PC-9 (cell line): ENCODE measurements at regions of chr6 and their contacts with region 1.

Region 1: GRCh38 chr6:151553416-151554165 is 59.8 kb downstream of the CCDC170 start:
- DNase-seq: no peak
- H3K4me3 ChIP-seq: no peak overlapping the region
- H3K27ac ChIP-seq: no peak overlapping the region
- H3K4me1 ChIP-seq: no peaks in the 10 kb centered on the region
- H3K27me3 ChIP-seq: no peaks in the 10 kb centered on the region
- CTCF ChIP-seq: no peak

Region 2: DNA sequence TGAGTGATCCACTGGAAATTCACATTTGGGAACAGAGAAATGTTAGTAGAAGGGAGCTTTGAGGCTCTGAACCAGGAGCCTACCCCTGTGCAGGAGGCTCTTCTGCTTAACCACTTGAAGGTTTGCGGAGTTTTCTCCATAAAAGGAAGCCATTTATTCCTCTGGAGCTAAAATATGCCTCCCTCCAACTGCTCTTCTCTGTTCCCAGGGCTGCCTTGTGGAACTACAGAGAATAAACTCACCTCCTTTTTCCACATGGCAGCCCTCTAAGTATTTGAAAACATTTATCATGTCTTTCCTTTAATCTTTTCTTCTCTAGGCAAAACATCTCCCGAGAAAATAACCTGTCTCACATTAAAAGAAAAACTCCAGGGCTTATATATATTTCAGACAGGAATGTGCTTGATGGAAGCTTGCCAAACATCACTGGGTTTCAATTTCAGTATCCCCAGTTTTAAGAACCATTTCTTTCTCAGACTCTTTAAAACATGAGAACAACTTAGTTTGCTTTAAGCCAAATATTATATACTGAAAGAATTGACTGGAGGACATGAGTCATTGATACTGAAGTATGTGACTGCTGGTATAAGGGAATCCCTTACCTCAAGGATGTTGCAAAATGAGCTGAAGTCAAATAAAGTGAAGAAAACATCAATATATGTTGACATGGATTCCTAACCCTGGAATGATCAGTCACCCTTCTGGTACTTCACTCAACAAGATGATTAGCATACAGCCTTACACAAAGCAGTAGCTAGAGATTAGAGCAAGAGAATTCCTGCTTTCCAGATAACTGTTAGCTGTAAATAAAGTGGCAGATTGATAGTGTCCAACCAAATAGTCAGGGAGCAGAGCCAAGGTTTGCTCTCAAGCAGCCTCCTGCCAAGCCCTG is 236.2 kb before region 1 on chr6:
- CTCF ChIA-PET with region 1: no interaction called
- POLR2A ChIA-PET with region 1: no interaction called
- intact Hi-C with region 1: no loop called
- DNase-seq: peak in 1 of 2 experiments; percentile 94
- H3K4me3 ChIP-seq: no peak overlapping the region
- H3K27ac ChIP-seq: peak overlapping the region; percentile 76
- H3K4me1 ChIP-seq: peaks cover 26% of the 10 kb centered on the region
- H3K27me3 ChIP-seq: no peaks in the 10 kb centered on the region
- CTCF ChIP-seq: no peak

Region 3: GRCh38 chr6:151475653-151476523 is 77.7 kb before region 1 on chr6:
- CTCF ChIA-PET with region 1: no interaction called
- POLR2A ChIA-PET with region 1: no interaction called
- intact Hi-C with region 1: no loop called
- DNase-seq: peak; percentile 6 to 42
- H3K4me3 ChIP-seq: no peak overlapping the region
- H3K27ac ChIP-seq: no peak overlapping the region
- H3K4me1 ChIP-seq: no peaks in the 10 kb centered on the region
- H3K27me3 ChIP-seq: no peaks in the 10 kb centered on the region
- CTCF ChIP-seq: peak; percentile 84

Region 4: DNA sequence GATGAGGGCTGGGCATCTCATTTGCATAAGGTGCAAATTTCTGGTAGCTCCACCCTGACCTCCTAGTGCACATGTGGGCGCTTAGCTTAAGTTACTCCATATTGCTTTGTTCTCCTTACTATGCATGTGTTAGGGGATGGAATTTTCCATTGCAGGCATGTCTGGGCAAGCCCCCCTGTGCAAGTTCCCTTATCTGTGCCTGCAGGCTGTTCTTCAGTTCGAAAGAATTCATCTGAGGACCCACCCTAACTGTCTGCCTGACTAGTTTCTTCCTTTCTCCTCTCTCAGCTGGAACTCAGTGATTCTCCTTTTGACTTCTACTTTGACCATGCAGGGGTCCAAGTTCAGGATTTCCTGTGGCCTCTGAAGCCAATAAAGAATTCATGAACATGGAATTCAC is 29.5 kb before region 1 on chr6:
- CTCF ChIA-PET with region 1: no interaction called
- POLR2A ChIA-PET with region 1: interaction called, 27 read pairs
- intact Hi-C with region 1: no loop called
- DNase-seq: no peak
- H3K4me3 ChIP-seq: no peak overlapping the region
- H3K27ac ChIP-seq: no peak overlapping the region
- H3K4me1 ChIP-seq: no peaks in the 10 kb centered on the region
- H3K27me3 ChIP-seq: no peaks in the 10 kb centered on the region
- CTCF ChIP-seq: no peak